ENCODE measurements at regions of chr3 and their contacts with region 1.

Region 1: GRCh38 chr3:14178247-14179113 is at the starts of genes LSM3 and XPC:
- DNase-seq: peak; percentile 97
- H3K4me3 Mint-ChIP-seq: peak within 1 kb of the TSS; percentile 96
- H3K27ac Mint-ChIP-seq: peak within 1 kb of the TSS; percentile 98
- H3K4me1 Mint-ChIP-seq: peaks cover 63% of the 10 kb centered on the region
- H3K27me3 Mint-ChIP-seq: no peaks in the 10 kb centered on the region
- total RNA-seq, gene LSM3: 26.1 to 26.2 TPM
- total RNA-seq, gene XPC: 39.0 to 39.8 TPM

Region 2: DNA sequence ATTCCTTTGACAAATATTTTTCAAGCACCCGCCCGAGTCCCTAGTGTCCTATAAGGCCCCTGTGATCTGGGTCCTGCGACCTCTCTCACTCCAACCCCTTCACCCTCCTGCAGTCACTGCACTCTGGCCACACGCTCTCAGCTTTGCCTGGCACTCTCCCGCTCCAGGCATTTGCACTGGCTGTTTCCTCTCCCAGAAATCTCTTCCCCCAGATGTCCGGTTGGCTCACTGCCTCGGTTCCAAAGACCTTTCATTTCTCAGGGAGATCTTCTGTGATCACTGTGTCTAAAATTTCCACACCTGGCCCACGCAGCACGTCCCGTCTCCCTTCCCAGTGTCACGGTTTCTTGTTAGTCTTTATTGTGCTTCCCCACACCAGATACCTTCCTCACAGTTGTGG is 396.0 kb before region 1 on chr3:
- CTCF ChIA-PET with region 1: no interaction called
- intact Hi-C with region 1: no loop called
- DNase-seq: no peak
- H3K4me3 Mint-ChIP-seq: no peak overlapping the region
- H3K27ac Mint-ChIP-seq: no peak overlapping the region
- H3K4me1 Mint-ChIP-seq: peaks cover 4% of the 10 kb centered on the region
- H3K27me3 Mint-ChIP-seq: peaks cover 5% of the 10 kb centered on the region

Region 3: DNA sequence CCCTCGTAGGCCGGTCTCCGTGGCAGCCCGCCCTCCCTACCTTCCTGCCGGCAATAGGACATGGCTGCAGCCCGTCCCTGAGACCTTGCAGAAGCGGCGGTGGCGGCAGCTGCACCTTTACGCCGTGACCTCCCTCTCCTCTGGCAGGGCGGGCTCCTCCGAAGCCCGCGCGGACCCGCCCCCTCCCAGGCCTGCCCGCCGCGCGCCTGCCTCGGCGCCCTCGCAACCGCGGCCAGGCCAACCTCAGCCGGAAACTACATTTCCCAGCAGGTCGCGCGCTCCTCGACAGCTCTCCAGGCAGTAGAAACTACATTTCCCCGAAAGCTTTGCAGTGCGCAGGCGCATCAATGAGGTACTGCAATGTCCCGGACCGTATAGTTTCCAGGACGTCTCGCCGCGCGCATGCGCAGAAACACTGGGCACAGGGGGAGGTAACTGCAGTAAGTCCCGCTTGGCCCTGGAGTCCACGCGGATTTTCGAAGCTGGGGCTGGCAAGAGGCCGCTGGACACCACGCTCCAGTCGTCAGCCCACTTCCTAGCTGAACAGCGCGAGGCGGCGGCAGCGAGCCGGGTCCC is 53.8 kb before region 1 on chr3 and contains the starts of genes CHCHD4 and TMEM43:
- CTCF ChIA-PET with region 1: interaction called, 4 read pairs
- intact Hi-C with region 1: loop called (anchors 1 kb)
- DNase-seq: peak; percentile 99
- H3K4me3 Mint-ChIP-seq: peak within 1 kb of the TSS; percentile 93
- H3K27ac Mint-ChIP-seq: peak within 1 kb of the TSS; percentile 92
- H3K4me1 Mint-ChIP-seq: peaks cover 50% of the 10 kb centered on the region
- H3K27me3 Mint-ChIP-seq: no peaks in the 10 kb centered on the region
- total RNA-seq, gene CHCHD4: 16.2 to 17.9 TPM
- total RNA-seq, gene TMEM43: 18.3 to 19.8 TPM

Region 4: DNA sequence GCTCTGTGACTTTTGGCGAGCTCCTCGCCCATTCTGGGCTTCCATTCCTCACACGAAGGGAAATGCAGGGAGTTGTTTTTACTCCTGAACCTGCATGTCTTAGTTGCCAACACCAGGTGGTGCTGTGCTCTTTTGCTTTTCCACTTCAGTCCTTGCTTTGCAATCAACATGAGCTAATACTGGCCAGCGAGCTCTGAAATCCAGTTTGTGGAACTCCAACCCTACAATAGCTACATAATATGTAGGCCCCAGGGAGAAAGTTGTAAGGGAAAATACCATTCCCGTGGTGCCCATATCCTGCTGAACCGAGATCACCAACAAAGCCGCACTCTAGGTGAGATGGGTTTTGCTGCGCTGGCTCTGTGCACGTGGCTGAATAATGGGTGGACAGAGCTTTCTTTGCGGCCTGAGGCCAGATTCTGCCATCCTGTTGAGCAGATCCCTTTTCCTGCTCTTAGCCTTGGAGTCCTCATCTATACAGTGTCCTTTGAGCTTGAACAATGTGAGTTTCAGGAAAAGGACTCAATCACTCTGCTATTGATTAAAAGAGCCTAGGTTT is 25.1 kb after region 1 on chr3:
- CTCF ChIA-PET with region 1: interaction called, 13 read pairs
- intact Hi-C with region 1: no loop called
- DNase-seq: peak; percentile 64
- H3K4me3 Mint-ChIP-seq: no peak overlapping the region
- H3K27ac Mint-ChIP-seq: no peak overlapping the region
- H3K4me1 Mint-ChIP-seq: peaks cover 2% of the 10 kb centered on the region
- H3K27me3 Mint-ChIP-seq: no peaks in the 10 kb centered on the region

Region 5: GRCh38 chr3:14319654-14320182 is 141.2 kb after region 1 on chr3:
- CTCF ChIA-PET with region 1: no interaction called
- intact Hi-C with region 1: no loop called
- DNase-seq: peak; percentile 30
- H3K4me3 Mint-ChIP-seq: no peak overlapping the region
- H3K27ac Mint-ChIP-seq: no peak overlapping the region
- H3K4me1 Mint-ChIP-seq: no peaks in the 10 kb centered on the region
- H3K27me3 Mint-ChIP-seq: no peaks in the 10 kb centered on the region

Region 6: DNA sequence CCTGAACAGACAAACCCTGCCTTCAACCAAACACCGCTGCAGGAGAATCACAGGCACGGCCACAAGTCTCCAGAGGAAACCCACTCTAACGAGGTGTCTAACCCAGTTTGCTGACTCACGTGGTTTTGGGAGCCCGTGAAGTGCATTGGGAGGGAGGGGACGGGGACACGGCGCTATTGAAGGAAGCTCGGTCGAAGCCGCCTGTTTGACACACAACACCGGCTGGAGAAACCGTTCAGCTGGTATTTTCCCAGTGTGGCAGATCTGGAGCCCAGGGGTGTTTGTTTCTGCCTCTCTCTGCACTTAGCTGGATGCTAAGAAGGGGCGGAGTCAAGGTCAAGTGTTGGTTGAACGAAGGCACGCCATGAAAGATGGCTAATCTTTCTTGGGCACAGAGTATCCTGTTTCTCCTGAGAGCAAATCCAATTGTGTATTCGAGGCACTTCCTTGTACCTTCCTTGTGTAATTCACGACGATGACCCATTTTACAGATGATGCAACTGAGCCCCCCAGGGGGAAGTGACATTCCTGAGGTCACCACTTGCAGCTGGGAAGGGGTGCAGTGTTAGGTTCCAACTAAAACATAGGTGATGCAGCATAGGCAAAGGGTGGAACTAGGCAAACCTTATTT is 246.3 kb after region 1 on chr3:
- CTCF ChIA-PET with region 1: no interaction called
- intact Hi-C with region 1: loop called (anchors 1 kb)
- DNase-seq: peak; percentile 48
- H3K4me3 Mint-ChIP-seq: no peak overlapping the region
- H3K27ac Mint-ChIP-seq: peak overlapping the region; percentile 86
- H3K4me1 Mint-ChIP-seq: peaks cover 75% of the 10 kb centered on the region
- H3K27me3 Mint-ChIP-seq: no peaks in the 10 kb centered on the region

Region 7: DNA sequence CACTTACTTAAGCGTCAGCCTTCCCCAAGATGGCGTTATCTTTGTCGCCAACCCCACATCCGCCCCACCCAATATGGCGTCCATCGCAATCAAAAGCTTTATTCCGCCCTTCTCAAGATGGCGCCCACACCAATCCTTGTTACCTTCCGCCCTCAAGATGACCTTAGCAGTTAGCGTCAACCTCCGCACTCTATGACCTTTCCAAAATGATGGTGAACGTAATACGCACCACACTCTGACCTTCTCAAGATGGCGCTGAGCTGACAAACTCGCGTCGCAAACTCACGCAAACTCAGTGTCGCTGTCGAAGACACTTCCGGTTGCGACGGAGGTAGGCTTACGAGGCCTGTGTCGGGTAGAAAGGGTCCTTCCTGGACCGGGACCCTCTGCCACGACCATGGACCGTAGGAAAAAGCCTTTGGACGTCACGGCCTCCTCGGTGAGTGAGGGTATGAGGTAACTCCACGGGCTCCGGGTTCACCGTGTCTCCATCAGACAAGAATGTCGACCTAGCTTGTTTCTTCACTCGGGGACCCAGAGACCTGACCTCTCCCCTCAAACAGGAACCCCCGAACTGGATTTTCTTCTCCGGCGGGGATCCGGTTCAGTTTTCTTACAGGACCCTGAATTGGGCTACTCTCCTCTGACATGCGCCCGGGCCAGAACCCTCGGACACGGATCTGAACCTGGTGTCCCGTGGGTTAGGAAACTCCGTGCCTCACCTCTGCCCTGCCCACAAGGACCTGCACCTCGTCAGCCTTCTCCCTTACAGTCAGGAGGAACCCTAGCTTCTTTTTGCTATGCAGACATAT is 473.2 kb after region 1 on chr3 and contains the start of gene CCDC174:
- CTCF ChIA-PET with region 1: no interaction called
- intact Hi-C with region 1: loop called (anchors 1 kb)
- DNase-seq: peak; percentile 97
- H3K4me3 Mint-ChIP-seq: peak within 1 kb of the TSS; percentile 99
- H3K27ac Mint-ChIP-seq: peak within 1 kb of the TSS; percentile 98
- H3K4me1 Mint-ChIP-seq: peaks cover 38% of the 10 kb centered on the region
- H3K27me3 Mint-ChIP-seq: no peaks in the 10 kb centered on the region
- total RNA-seq, gene CCDC174: 16.1 to 20.7 TPM

Region 8: GRCh38 chr3:15098503-15099363 is 920.3 kb after region 1 on chr3 and contains the start of gene RBSN:
- CTCF ChIA-PET with region 1: no interaction called
- intact Hi-C with region 1: loop called (anchors 1 kb)
- DNase-seq: peak; percentile 97
- H3K4me3 Mint-ChIP-seq: peak within 1 kb of the TSS; percentile 90
- H3K27ac Mint-ChIP-seq: peak within 1 kb of the TSS; percentile 83
- H3K4me1 Mint-ChIP-seq: peaks cover 10% of the 10 kb centered on the region
- H3K27me3 Mint-ChIP-seq: no peaks in the 10 kb centered on the region
- total RNA-seq, gene RBSN: 15.3 to 15.8 TPM

Measured in activated naive CD4-positive, alpha-beta T cell treated with anti-CD3 and anti-CD28 coated beads for 36 hours (primary cell).